ENCODE measurements at regions of chr13 and their contacts with region 1.

Region 1: GRCh38 chr13:44470638-44471562 is 97.3 kb downstream of the SERP2 start:
- DNase-seq: peak; percentile 46
- H3K4me3 ChIP-seq: peak overlapping the region in 1 of 3 experiments; percentile 50
- H3K27ac ChIP-seq: peak overlapping the region; percentile 51
- H3K4me1 ChIP-seq: peaks cover 29% of the 10 kb centered on the region
- H3K27me3 ChIP-seq: no peaks in the 10 kb centered on the region
- CTCF ChIP-seq: peak; percentile 6 to 20
- POLR2A ChIP-seq: no peak

Region 2: DNA sequence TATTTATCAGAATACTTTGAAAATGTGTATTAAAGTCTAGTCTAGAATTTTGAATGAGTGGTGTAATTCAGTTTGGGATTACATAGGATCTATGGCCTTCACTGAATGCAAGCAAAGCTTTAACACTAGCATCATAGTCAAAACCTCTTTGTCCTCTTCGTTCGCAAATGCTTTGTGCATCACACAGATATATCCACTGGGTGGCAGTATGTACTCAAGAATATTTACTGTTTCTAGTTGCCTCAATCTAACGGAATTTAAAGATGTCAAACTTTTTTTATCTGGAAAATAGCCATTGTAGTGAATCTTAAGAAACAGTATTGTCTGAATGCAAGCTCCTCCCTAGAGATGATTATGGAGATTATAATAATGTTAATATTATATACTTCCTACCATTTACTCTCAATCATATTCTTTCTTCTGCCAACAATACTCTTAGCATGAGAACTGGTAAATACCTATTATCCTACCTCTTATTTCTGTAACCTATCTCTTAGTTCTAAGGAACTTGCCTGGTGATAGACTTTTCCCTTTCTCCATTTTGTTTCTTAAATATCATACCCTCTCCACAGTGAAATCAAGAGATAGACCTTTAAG is 565.4 kb before region 1 on chr13:
- CTCF ChIA-PET with region 1: interaction called, 46 read pairs
- POLR2A ChIA-PET with region 1: no interaction called
- dilution Hi-C with region 1: loop called (anchors 25 kb)
- intact Hi-C with region 1: loop called (anchors 1 kb)
- DNase-seq: peak; percentile 68
- H3K4me3 ChIP-seq: no peak overlapping the region
- H3K27ac ChIP-seq: no peak overlapping the region
- H3K4me1 ChIP-seq: no peaks in the 10 kb centered on the region
- H3K27me3 ChIP-seq: peaks cover 0 to 6% of the 10 kb centered on the region in 2 experiments
- CTCF ChIP-seq: peak; percentile 43 to 45
- POLR2A ChIP-seq: no peak

Region 3: DNA sequence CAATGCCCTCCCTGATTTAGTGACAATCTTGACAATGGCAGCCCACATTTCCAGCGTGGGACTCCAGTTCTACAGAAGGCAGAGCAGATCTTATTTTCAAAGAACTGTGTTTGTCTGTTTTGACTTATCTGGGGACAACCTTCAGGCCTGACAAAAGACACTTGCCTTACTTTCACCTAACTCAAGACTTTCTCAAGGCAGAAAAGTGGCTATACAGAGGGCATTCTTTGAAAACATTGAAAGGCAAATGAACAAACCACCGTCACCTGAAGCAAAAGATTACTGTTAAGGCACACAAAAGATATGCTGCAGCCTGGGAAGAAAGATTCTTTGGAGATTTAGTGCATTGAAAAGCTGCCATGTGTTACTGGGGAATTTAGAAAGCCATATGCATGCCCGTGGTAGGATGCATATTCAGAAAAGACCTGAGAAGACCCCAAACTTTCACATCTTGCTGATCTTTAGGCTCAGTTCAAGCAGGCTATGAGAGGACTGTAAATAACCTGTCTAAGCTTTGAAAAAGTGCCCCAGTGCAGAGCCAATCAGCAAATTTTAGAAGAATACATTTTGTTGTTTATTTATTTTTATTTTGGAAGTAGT is 22.4 kb after region 1 on chr13:
- CTCF ChIA-PET with region 1: no interaction called
- POLR2A ChIA-PET with region 1: no interaction called
- dilution Hi-C with region 1: no loop called
- intact Hi-C with region 1: no loop called
- DNase-seq: no peak
- H3K4me3 ChIP-seq: no peak overlapping the region
- H3K27ac ChIP-seq: no peak overlapping the region
- H3K4me1 ChIP-seq: no peaks in the 10 kb centered on the region
- H3K27me3 ChIP-seq: no peaks in the 10 kb centered on the region
- CTCF ChIP-seq: no peak
- POLR2A ChIP-seq: no peak

Region 4: GRCh38 chr13:44955406-44955805 is 484.5 kb after region 1 on chr13:
- CTCF ChIA-PET with region 1: no interaction called
- POLR2A ChIA-PET with region 1: no interaction called
- dilution Hi-C with region 1: no loop called
- intact Hi-C with region 1: no loop called
- DNase-seq: no peak
- H3K4me3 ChIP-seq: no peak overlapping the region
- H3K27ac ChIP-seq: no peak overlapping the region
- H3K4me1 ChIP-seq: no peaks in the 10 kb centered on the region
- H3K27me3 ChIP-seq: no peaks in the 10 kb centered on the region
- CTCF ChIP-seq: no peak
- POLR2A ChIP-seq: no peak